Activated T-helper 2 cell treated with anti-CD3 and anti-CD28 coated beads, Interferon-gamma antibody, Interleukin-2, Interleukin-4, amounts not matched to agents 10 μg/mL and 5 μg/mL and 100 μg/mL, durations not matched to agents 14 hours and 24 hours and 36 hours (primary cell): ENCODE measurements at regions of chr7 and their contacts with region 1.

Region 1: GRCh38 chr7:138752568-138753518 is 45.0 kb upstream of the TMEM213 start:
- DNase-seq: peak; percentile 86
- H3K4me3 Mint-ChIP-seq: no peak overlapping the region
- H3K27ac Mint-ChIP-seq: peak overlapping the region; percentile 50
- H3K4me1 Mint-ChIP-seq: peaks cover 35% of the 10 kb centered on the region
- H3K27me3 Mint-ChIP-seq: peaks cover 11% of the 10 kb centered on the region

Region 2: GRCh38 chr7:138459413-138460175 is 293.2 kb before region 1 on chr7:
- intact Hi-C with region 1: loop called (anchors 2 kb)
- DNase-seq: peak; percentile 97
- H3K4me3 Mint-ChIP-seq: peak overlapping the region; percentile 74
- H3K27ac Mint-ChIP-seq: peak overlapping the region; percentile 21
- H3K4me1 Mint-ChIP-seq: peaks cover 24% of the 10 kb centered on the region
- H3K27me3 Mint-ChIP-seq: peaks cover 3% of the 10 kb centered on the region

Region 3: GRCh38 chr7:138738551-138739335 is 14.1 kb before region 1 on chr7:
- intact Hi-C with region 1: no loop called
- DNase-seq: peak; percentile 69
- H3K4me3 Mint-ChIP-seq: no peak overlapping the region
- H3K27ac Mint-ChIP-seq: no peak overlapping the region
- H3K4me1 Mint-ChIP-seq: peaks cover 2% of the 10 kb centered on the region
- H3K27me3 Mint-ChIP-seq: peaks cover 5% of the 10 kb centered on the region

Region 4: GRCh38 chr7:138768241-138768640 is 15.4 kb after region 1 on chr7:
- intact Hi-C with region 1: no loop called
- DNase-seq: no peak
- H3K4me3 Mint-ChIP-seq: no peak overlapping the region
- H3K27ac Mint-ChIP-seq: no peak overlapping the region
- H3K4me1 Mint-ChIP-seq: no peaks in the 10 kb centered on the region
- H3K27me3 Mint-ChIP-seq: peaks cover 10% of the 10 kb centered on the region

Region 5: DNA sequence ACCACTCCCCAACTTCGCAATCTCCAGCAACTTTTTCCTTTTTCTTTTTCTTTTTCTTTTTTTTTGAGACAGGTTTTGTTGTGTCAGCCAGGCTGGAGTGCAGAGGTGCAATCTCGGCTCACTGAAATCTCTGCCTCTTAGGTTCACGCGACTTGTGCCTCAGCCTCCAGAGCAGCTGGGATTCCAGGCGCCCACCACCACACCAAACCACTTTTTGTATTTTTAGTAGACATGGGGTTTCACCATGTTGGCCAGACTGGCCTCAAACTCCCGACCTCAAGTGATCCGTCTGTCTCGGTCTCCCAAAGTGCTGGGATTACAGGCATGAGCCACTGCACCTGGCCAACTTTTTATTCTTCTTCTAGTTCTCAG is 173.4 kb after region 1 on chr7:
- intact Hi-C with region 1: no loop called
- DNase-seq: no peak
- H3K4me3 Mint-ChIP-seq: no peak overlapping the region
- H3K27ac Mint-ChIP-seq: peak overlapping the region; percentile 52
- H3K4me1 Mint-ChIP-seq: peaks cover 12% of the 10 kb centered on the region
- H3K27me3 Mint-ChIP-seq: peaks cover 7% of the 10 kb centered on the region

Region 6: GRCh38 chr7:138948108-138948802 is 195.4 kb after region 1 on chr7:
- intact Hi-C with region 1: no loop called
- DNase-seq: no peak
- H3K4me3 Mint-ChIP-seq: no peak overlapping the region
- H3K27ac Mint-ChIP-seq: no peak overlapping the region
- H3K4me1 Mint-ChIP-seq: no peaks in the 10 kb centered on the region
- H3K27me3 Mint-ChIP-seq: peaks cover 36% of the 10 kb centered on the region